Activated CD4-positive, alpha-beta T cell treated with anti-CD3 and anti-CD28 coated beads for 36 hours (primary cell): ENCODE measurements at regions of chr7 and their contacts with region 1.

Region 1: DNA sequence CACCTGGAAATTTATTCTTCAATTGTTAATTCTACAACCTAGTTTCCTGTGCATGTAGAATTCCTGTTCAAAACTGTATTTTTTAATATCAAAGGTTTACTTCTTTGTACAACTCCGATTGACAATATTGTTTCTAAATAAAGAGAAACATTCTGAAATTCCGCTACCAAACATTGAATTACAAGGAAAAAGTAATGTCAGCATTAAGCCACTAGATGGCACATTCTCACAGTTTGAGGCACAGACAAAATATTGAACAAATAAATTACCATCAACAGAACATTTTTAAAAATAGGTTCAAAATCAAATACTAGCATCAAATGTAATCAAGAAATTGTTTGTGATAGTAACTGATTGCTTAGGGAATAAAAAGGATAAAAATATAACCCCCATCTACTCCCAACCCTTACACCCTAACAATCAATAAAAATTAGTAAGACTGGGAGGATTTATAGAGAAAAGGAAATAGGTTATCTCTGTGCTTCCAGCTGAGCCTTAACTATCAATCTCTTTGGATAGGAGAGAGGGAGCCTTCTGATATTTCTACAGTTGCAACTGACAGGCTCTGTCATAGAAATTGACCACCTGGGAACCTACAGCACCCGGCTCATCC is 86.6 kb upstream of the C7orf33 start:
- DNase-seq: no peak
- ATAC-seq: no peak
- H3K4me3 Mint-ChIP-seq: no peak overlapping the region
- H3K27ac Mint-ChIP-seq: no peak overlapping the region
- H3K4me1 Mint-ChIP-seq: peaks cover 36% of the 10 kb centered on the region
- H3K27me3 Mint-ChIP-seq: peaks cover 24% of the 10 kb centered on the region

Region 2: GRCh38 chr7:148535217-148535616 is 31.2 kb after region 1 on chr7:
- CTCF ChIA-PET with region 1: no interaction called
- POLR2A ChIA-PET with region 1: no interaction called
- intact Hi-C with region 1: loop called in 1 of 2 experiments (anchors 1 kb)
- DNase-seq: peak; percentile 68
- ATAC-seq: peak; percentile 90
- H3K4me3 Mint-ChIP-seq: peak overlapping the region; percentile 57
- H3K27ac Mint-ChIP-seq: peak overlapping the region; percentile 73
- H3K4me1 Mint-ChIP-seq: peaks cover 11% of the 10 kb centered on the region
- H3K27me3 Mint-ChIP-seq: peaks cover 21% of the 10 kb centered on the region

Region 3: DNA sequence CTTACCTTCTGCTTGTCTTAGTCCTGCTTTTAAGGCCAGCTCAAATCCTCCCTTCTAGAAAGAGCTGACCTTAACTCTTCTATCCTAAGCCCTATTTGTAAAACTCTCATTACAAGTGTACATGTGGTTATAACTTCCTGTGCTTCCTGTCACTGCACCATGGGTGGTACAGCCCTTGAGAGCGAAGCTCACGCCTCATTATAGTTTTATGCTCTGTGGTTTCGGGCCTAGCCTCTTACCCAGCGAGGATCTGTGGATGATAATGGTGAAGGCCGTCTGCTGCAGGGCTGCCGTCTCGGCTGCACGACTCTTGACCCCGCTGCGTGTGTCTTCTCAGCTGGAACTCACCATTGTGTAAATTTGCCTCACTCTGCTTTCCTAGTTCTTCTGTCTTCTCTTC is 269.4 kb after region 1 on chr7:
- CTCF ChIA-PET with region 1: interaction called, 3 read pairs
- POLR2A ChIA-PET with region 1: no interaction called
- intact Hi-C with region 1: loop called in 1 of 2 experiments (anchors 2 kb)
- DNase-seq: peak; percentile 41
- ATAC-seq: peak; percentile 80
- H3K4me3 Mint-ChIP-seq: peak overlapping the region; percentile 16
- H3K27ac Mint-ChIP-seq: peak overlapping the region; percentile 77
- H3K4me1 Mint-ChIP-seq: peaks cover 25% of the 10 kb centered on the region
- H3K27me3 Mint-ChIP-seq: no peaks in the 10 kb centered on the region

Region 4: GRCh38 chr7:149071641-149072437 is 567.9 kb after region 1 on chr7:
- CTCF ChIA-PET with region 1: interaction called, 3 read pairs
- POLR2A ChIA-PET with region 1: no interaction called
- intact Hi-C with region 1: loop called in 1 of 2 experiments (anchors 5 kb)
- DNase-seq: peak; percentile 70
- ATAC-seq: peak; percentile 84
- H3K4me3 Mint-ChIP-seq: peak overlapping the region; percentile 46
- H3K27ac Mint-ChIP-seq: peak overlapping the region; percentile 63
- H3K4me1 Mint-ChIP-seq: peaks cover 9% of the 10 kb centered on the region
- H3K27me3 Mint-ChIP-seq: no peaks in the 10 kb centered on the region

Region 5: GRCh38 chr7:149147072-149147751 is 643.2 kb after region 1 on chr7 and contains the start of gene ZNF398:
- CTCF ChIA-PET with region 1: no interaction called
- POLR2A ChIA-PET with region 1: no interaction called
- intact Hi-C with region 1: no loop called
- DNase-seq: peak; percentile 87
- ATAC-seq: peak; percentile 71
- H3K4me3 Mint-ChIP-seq: peak within 1 kb of the TSS; percentile 98
- H3K27ac Mint-ChIP-seq: peak within 1 kb of the TSS; percentile 99
- H3K4me1 Mint-ChIP-seq: peaks cover 34% of the 10 kb centered on the region
- H3K27me3 Mint-ChIP-seq: no peaks in the 10 kb centered on the region
- total RNA-seq, gene ZNF398: 9.6 to 10.5 TPM